ENCODE measurements at regions of chr19 and their contacts with region 1.

Region 1: GRCh38 chr19:18112989-18113478 is 15.5 kb downstream of the MAST3 start:
- DNase-seq: peak; percentile 85 to 92
- H3K4me3 ChIP-seq: no peak overlapping the region
- H3K4me3 Mint-ChIP-seq: no peak overlapping the region
- H3K27ac Mint-ChIP-seq: peak overlapping the region; percentile 38
- H3K4me1 ChIP-seq: peaks cover 17% of the 10 kb centered on the region
- H3K4me1 Mint-ChIP-seq: peaks cover 13% of the 10 kb centered on the region
- H3K27me3 ChIP-seq: no peaks in the 10 kb centered on the region
- H3K27me3 Mint-ChIP-seq: no peaks in the 10 kb centered on the region
- CTCF ChIP-seq: peak; percentile 87 to 89

Region 2: DNA sequence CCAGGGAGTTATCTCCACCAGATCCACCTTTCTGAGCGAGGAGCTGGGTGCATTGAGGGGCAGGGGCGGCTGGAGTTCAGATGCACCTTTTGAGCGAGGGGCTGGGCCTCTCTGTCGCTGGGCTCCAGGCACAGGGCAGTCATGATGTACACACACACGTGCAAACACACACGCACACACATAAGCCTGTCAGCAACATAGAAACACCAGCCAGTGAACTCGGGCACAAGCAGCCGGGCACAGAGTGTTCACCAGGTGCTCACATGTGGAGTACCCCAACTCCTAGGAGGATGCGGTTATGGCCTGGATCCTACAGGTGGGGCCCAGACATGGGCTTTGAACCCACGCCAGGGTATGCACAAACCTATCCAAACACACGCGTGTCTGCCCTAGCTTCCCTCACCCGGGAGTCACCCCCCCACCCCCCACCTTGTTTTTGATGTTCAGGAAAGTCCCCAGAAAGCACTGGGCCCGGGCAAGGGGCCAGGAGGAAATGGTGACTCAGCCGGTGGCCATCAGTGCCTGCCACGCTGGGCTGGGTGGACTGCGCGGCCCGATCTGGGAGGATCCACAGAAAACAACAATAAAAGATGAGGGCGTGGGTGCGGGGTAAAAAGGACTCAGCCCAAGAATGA is 91.8 kb before region 1 on chr19:
- CTCF ChIA-PET with region 1: no interaction called
- POLR2A ChIA-PET with region 1: no interaction called
- intact Hi-C with region 1: no loop called
- DNase-seq: no peak
- H3K4me3 ChIP-seq: no peak overlapping the region
- H3K4me3 Mint-ChIP-seq: no peak overlapping the region
- H3K27ac Mint-ChIP-seq: no peak overlapping the region
- H3K4me1 ChIP-seq: no peaks in the 10 kb centered on the region
- H3K4me1 Mint-ChIP-seq: peaks cover 6% of the 10 kb centered on the region
- H3K27me3 ChIP-seq: no peaks in the 10 kb centered on the region
- H3K27me3 Mint-ChIP-seq: no peaks in the 10 kb centered on the region
- CTCF ChIP-seq: no peak

Region 3: GRCh38 chr19:18152444-18152816 is 39.4 kb after region 1 on chr19:
- CTCF ChIA-PET with region 1: interaction called, 17 read pairs
- POLR2A ChIA-PET with region 1: interaction called, 5 read pairs
- intact Hi-C with region 1: loop called (anchors 1 kb)
- DNase-seq: peak; percentile 95 to 97
- H3K4me3 ChIP-seq: peak overlapping the region; percentile 49
- H3K4me3 Mint-ChIP-seq: peak overlapping the region; percentile 94
- H3K27ac Mint-ChIP-seq: peak overlapping the region; percentile 98
- H3K4me1 ChIP-seq: peaks cover 11% of the 10 kb centered on the region
- H3K4me1 Mint-ChIP-seq: peaks cover 10% of the 10 kb centered on the region
- H3K27me3 ChIP-seq: no peaks in the 10 kb centered on the region
- H3K27me3 Mint-ChIP-seq: no peaks in the 10 kb centered on the region
- CTCF ChIP-seq: peak; percentile 50 to 66

Region 4: GRCh38 chr19:18167975-18168645 is 55.1 kb after region 1 on chr19:
- CTCF ChIA-PET with region 1: interaction called, 25 read pairs
- POLR2A ChIA-PET with region 1: no interaction called
- intact Hi-C with region 1: loop called (anchors 1 kb)
- DNase-seq: peak in 1 of 2 experiments; percentile 65
- H3K4me3 ChIP-seq: no peak overlapping the region
- H3K4me3 Mint-ChIP-seq: no peak overlapping the region
- H3K27ac Mint-ChIP-seq: no peak overlapping the region
- H3K4me1 ChIP-seq: no peaks in the 10 kb centered on the region
- H3K4me1 Mint-ChIP-seq: no peaks in the 10 kb centered on the region
- H3K27me3 ChIP-seq: no peaks in the 10 kb centered on the region
- H3K27me3 Mint-ChIP-seq: no peaks in the 10 kb centered on the region
- CTCF ChIP-seq: peak; percentile 76 to 86

Region 5: DNA sequence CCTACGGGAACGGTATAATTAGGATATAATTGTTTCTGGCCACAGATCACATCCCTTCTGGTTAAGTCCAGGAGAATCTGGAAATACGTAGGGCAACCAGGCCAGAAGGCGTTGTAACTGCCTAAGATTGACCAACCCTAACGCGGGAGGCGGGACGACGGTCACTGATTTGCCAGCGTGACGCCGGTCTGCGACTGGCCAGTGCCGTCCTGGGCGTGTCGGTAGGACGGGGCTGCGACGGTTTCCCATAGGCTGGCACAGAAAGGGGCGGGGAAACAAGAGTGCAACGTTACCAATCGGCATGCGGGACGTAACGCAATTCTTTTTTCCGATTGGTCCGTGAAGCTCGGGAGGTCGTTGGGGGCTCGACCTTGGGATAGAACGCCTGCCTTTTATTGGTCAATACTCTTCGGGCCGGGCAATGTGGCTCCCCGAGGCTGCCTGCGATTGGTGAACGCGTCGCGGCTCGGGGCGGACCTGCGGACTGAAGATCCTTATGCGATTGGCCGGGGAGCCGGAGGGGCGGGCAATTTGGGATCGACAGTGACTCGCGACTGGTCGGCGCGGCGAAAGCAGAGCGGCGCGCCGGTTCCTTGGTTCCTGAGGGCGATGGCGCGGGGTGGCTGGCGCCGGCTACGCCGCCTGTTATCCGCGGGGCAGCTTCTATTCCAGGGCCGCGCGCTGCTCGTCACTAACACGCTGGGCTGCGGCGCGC is 79.8 kb after region 1 on chr19 and contains the start of gene MPV17L2:
- CTCF ChIA-PET with region 1: interaction called, 16 read pairs
- POLR2A ChIA-PET with region 1: interaction called, 3 read pairs
- intact Hi-C with region 1: no loop called
- DNase-seq: peak; percentile 98 to 99
- H3K4me3 ChIP-seq: peak within 1 kb of the TSS; percentile 77
- H3K4me3 Mint-ChIP-seq: peak within 1 kb of the TSS; percentile 76
- H3K27ac Mint-ChIP-seq: peak within 1 kb of the TSS; percentile 69
- H3K4me1 ChIP-seq: peaks cover 4% of the 10 kb centered on the region; the same call in 1 of the 2 replicates
- H3K4me1 Mint-ChIP-seq: no peaks in the 10 kb centered on the region
- H3K27me3 ChIP-seq: no peaks in the 10 kb centered on the region
- H3K27me3 Mint-ChIP-seq: no peaks in the 10 kb centered on the region
- CTCF ChIP-seq: no peak
- total RNA-seq, gene MPV17L2: 14.1 and 16.6 TPM in 2 replicates